ENCODE measurements at regions of chr15 and their contacts with region 1.

Region 1: DNA sequence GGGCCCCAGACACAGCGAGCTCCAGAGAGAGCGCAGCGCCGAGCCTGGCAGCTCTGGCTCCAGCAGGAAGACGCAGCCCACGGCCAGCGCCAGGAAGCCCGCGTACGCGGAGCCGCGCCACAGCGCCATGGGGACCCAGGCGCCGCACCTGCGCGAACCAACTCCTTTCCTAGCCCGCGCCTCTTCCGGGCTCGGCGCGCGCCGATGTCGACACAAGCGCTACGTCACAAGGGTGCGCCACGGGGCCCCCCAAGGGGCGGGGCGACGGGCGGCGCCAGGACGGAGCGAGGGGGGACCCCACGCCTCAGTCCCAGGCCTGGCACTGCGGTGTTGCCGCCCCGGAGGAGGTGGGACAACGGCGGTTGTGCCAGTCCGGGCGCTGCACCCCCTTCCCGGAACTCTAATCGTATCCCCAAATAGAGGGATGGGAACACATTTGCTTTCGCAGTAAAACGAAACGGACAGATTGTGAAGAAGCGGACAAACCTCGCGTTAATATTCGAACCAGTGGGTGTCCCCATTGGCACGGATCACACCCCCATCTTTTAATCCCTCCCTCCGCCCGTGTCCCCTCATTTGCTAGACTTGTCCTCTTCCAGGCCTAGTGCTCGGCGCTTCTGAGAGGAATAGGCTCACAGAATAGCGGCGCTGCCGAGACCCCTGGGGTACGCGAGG is at the start of gene ADPGK:
- DNase-seq: peak; percentile 84 to 94
- H3K4me3 ChIP-seq: peak within 1 kb of the TSS; percentile 93
- H3K4me3 Mint-ChIP-seq: peak within 1 kb of the TSS; percentile 95
- H3K27ac Mint-ChIP-seq: peak within 1 kb of the TSS; percentile 94
- H3K4me1 ChIP-seq: 0 out of 2 replicates have a peak, but pooled peaks cover 6% of the 10 kb centered on the region
- H3K4me1 Mint-ChIP-seq: peaks cover 6% of the 10 kb centered on the region
- H3K27me3 ChIP-seq: no peaks in the 10 kb centered on the region
- H3K27me3 Mint-ChIP-seq: peaks cover 5% of the 10 kb centered on the region
- CTCF ChIP-seq: no peak
- total RNA-seq, gene ADPGK: 52.6 and 55.6 TPM in 2 replicates

Region 2: DNA sequence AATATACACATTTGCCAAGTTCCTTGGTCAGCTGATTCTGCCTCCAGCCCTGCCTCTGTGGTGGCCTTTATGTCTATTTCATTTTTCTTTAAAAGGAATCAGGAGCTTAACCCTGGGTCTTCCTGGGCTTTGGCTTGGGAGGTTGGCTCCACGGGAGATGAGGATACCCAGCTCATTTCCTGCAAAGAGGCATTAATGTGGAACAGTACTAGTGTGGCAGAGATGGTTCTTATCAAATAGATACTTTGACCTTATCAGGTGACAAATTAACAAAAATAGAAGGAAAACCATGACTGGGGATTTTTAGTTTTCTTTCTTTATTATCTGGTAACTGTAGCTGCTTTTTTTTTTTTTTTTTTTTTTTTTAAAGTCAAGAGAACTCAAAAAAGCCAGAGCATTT is 54.9 kb before region 1 on chr15:
- CTCF ChIA-PET with region 1: interaction called, 4 read pairs
- POLR2A ChIA-PET with region 1: interaction called, 10 read pairs
- intact Hi-C with region 1: loop called (anchors 5 kb)
- DNase-seq: no peak
- H3K4me3 ChIP-seq: no peak overlapping the region
- H3K4me3 Mint-ChIP-seq: no peak overlapping the region
- H3K27ac Mint-ChIP-seq: no peak overlapping the region
- H3K4me1 ChIP-seq: peaks cover 18% of the 10 kb centered on the region
- H3K4me1 Mint-ChIP-seq: peaks cover 12% of the 10 kb centered on the region
- H3K27me3 ChIP-seq: no peaks in the 10 kb centered on the region
- H3K27me3 Mint-ChIP-seq: no peaks in the 10 kb centered on the region
- CTCF ChIP-seq: no peak

Region 3: DNA sequence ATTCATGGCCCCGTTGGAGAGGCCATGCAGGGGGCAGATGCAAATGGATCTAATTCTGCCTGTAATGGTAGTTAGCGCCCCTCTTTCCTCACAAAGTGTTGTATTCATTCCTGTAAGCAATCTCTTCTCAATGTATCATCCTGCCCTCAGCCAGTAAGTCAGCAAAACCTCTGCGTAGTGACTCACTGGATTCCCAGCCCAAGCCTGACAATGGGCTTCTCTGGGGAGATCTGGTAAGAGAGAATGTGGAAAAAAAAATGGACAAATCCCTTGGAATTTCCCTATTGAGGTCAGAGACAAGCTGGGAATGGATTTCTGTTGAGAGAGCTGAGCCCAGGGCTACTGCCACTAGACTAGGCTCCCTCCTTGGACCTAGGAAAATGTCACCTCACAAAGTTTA is 25.5 kb before region 1 on chr15:
- CTCF ChIA-PET with region 1: no interaction called
- POLR2A ChIA-PET with region 1: no interaction called
- intact Hi-C with region 1: no loop called
- DNase-seq: no peak
- H3K4me3 ChIP-seq: no peak overlapping the region
- H3K4me3 Mint-ChIP-seq: no peak overlapping the region
- H3K27ac Mint-ChIP-seq: no peak overlapping the region
- H3K4me1 ChIP-seq: no peaks in the 10 kb centered on the region
- H3K4me1 Mint-ChIP-seq: no peaks in the 10 kb centered on the region
- H3K27me3 ChIP-seq: no peaks in the 10 kb centered on the region
- H3K27me3 Mint-ChIP-seq: no peaks in the 10 kb centered on the region
- CTCF ChIP-seq: no peak

Measured in Caco-2 (cell line).